ENCODE measurements at regions of chr10 and their contacts with region 1.

Region 1: GRCh38 chr10:112183329-112184051 is at the start of gene GPAM:
- DNase-seq: peak; percentile 95 to 98
- ATAC-seq: peak; percentile 98 to 100 (median 99)
- H3K4me3 ChIP-seq: peak within 1 kb of the TSS; percentile 73
- H3K27ac ChIP-seq: peak within 1 kb of the TSS; percentile 92
- H3K4me1 ChIP-seq: peaks cover 13% of the 10 kb centered on the region
- H3K27me3 ChIP-seq: no peaks in the 10 kb centered on the region
- CTCF ChIP-seq: no peak
- total RNA-seq, gene GPAM: 10.2 to 20.1 (median 12.6) TPM

Region 2: DNA sequence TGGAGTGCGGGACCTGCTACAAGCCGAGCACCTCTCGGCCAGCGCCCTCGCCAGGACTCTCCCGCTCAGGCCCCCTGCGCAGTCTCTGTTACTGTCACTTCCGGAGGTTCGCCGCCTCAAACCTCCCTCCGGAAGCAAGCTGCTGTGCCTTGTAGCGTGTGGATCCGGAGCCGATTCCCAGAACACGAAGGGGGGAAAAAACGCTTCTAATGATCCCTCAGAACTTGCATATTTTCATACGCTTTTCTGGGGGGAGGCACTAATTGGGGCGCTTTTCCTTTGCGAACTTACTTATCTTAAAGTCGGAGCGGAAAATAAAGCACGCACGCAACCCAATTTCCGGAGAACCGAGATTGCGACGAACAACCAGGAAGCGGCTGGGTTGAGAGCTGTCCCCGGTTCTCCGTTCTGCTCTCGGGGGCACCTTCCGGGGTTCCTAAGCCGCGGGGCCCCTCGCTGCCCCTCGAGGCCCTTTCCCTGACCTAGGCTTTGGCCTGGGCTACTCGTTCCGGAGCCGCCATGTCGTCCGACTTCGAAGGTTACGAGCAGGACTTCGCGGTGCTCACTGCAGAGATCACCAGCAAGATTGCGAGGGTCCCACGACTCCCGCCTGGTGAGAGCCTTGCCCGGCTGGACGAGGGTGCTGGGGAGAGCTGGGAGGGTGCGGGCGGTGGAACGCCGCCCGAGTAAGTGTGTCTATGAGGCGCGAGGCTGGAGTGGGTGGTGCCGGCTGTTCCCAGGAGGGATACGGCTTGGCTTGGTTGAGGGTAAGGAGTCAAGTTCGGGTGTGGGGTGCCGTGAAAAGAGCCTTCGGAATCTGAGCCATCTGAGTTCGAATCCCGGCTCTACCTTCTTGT is 263.6 kb after region 1 on chr10 and contains the starts of genes VTI1A and ZDHHC6:
- intact Hi-C with region 1: loop called (anchors 5 to 10 kb)
- DNase-seq: peak; percentile 87 to 94
- ATAC-seq: peak; percentile 97 to 99 (median 99)
- H3K4me3 ChIP-seq: peak within 1 kb of the TSS; percentile 70
- H3K27ac ChIP-seq: peak within 1 kb of the TSS; percentile 84
- H3K4me1 ChIP-seq: peaks cover 20% of the 10 kb centered on the region
- H3K27me3 ChIP-seq: no peaks in the 10 kb centered on the region
- CTCF ChIP-seq: peak; percentile 22
- total RNA-seq, gene VTI1A: 18.5 to 23.1 (median 20.1) TPM
- total RNA-seq, gene ZDHHC6: 10.8 to 15.3 (median 13.9) TPM